ENCODE measurements at regions of chr13 and their contacts with region 1.

Region 1: GRCh38 chr13:89660752-89661151 is 1686.7 kb upstream of the MIR17HG start:
- DNase-seq: no peak
- H3K4me3 ChIP-seq: no peak overlapping the region
- H3K27ac ChIP-seq: no peak overlapping the region
- H3K4me1 ChIP-seq: no peaks in the 10 kb centered on the region
- H3K27me3 ChIP-seq: no peaks in the 10 kb centered on the region
- CTCF ChIP-seq: no peak
- POLR2A ChIP-seq: no peak

Region 2: GRCh38 chr13:89627991-89628390 is 32.8 kb before region 1 on chr13:
- intact Hi-C with region 1: loop called (anchors 1 kb)
- DNase-seq: no peak
- H3K4me3 ChIP-seq: no peak overlapping the region
- H3K27ac ChIP-seq: no peak overlapping the region
- H3K4me1 ChIP-seq: no peaks in the 10 kb centered on the region
- H3K27me3 ChIP-seq: no peaks in the 10 kb centered on the region
- CTCF ChIP-seq: no peak
- POLR2A ChIP-seq: no peak

Measured in vagina (tissue), 2 donors.